HEK293T (cell line): ENCODE measurements at regions of chr14 and their contacts with region 1.

Region 1: DNA sequence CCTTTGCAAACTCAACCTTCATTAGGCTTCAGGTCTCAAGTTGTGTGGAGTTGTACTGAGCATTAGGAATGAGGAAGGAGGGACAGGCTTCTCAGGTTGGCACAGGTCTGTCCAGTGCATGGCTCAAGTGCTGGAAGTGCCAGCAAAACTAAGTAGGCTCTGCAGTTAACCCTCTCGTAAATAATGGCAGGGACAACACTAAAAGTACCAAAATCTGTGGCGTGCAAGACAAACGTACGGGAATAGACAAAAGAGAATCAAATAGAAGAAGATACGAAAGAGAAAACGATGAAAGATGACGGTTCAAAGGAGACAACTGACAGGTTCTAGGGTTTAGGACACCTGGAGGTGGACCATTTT is 612 bp downstream of the TRAPPC6B start:
- DNase-seq: no peak

Region 2: GRCh38 chr14:39015360-39015961 is 154.1 kb before region 1 on chr14:
- CTCF ChIA-PET with region 1: no interaction called
- POLR2A ChIA-PET with region 1: no interaction called
- DNase-seq: peak; percentile 34

Region 3: GRCh38 chr14:39102969-39103957 is 66.3 kb before region 1 on chr14 and contains the start of gene SEC23A:
- CTCF ChIA-PET with region 1: no interaction called
- POLR2A ChIA-PET with region 1: interaction called, 31 read pairs
- DNase-seq: peak; percentile 75

Region 4: DNA sequence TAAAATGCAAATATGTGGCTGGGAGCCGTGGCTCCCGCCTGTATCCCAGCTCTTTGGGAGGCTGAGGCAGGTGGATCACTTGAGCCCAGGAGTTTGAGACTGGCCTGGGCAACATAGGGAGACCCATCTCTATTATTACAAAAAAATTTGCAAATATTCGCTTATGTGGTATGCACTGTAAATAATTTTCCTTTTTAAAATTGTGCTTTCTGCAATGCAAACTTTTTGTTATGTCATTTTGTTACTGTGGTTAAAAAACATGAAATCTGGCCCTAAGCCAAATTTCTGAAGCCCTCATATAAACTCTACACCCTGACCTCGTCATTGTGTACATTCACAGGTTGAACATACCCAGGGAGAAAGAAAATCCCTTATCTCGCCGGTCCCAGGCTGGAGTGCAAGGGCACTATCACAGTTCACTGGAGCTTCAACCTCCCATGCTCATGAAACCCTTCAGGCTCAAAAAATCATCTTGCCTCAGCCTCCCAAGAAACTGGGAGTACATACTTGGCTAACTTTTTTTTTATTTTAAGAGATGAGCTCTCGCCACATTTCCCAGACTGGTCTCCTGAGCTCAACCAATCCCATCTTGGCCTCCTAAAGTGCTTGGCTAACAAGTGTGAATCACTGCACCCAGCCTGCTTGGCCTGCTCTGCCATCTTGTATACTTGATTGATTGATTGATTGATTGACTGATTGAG is 24.1 kb before region 1 on chr14:
- CTCF ChIA-PET with region 1: no interaction called
- POLR2A ChIA-PET with region 1: interaction called, 30 read pairs
- DNase-seq: no peak

Region 5: GRCh38 chr14:39181026-39181692 is 11.6 kb after region 1 on chr14:
- CTCF ChIA-PET with region 1: no interaction called
- POLR2A ChIA-PET with region 1: interaction called, 51 read pairs
- DNase-seq: no peak

Region 6: GRCh38 chr14:39426605-39427004 is 257.1 kb after region 1 on chr14:
- CTCF ChIA-PET with region 1: no interaction called
- POLR2A ChIA-PET with region 1: interaction called, 21 read pairs
- DNase-seq: no peak